Activated T-helper 1 cell treated with anti-CD3 and anti-CD28 coated beads, Interleukin-12 subunit alpha, Interleukin-12 subunit beta, Interleukin-2, Interleukin-4 antibody, amounts not matched to agents 30 ng/mL and 10 ng/mL and 1 ng/mL, durations not matched to agents 14 hours and 24 hours and 36 hours (primary cell): ENCODE measurements at regions of chr19 and their contacts with region 1.

Region 1: DNA sequence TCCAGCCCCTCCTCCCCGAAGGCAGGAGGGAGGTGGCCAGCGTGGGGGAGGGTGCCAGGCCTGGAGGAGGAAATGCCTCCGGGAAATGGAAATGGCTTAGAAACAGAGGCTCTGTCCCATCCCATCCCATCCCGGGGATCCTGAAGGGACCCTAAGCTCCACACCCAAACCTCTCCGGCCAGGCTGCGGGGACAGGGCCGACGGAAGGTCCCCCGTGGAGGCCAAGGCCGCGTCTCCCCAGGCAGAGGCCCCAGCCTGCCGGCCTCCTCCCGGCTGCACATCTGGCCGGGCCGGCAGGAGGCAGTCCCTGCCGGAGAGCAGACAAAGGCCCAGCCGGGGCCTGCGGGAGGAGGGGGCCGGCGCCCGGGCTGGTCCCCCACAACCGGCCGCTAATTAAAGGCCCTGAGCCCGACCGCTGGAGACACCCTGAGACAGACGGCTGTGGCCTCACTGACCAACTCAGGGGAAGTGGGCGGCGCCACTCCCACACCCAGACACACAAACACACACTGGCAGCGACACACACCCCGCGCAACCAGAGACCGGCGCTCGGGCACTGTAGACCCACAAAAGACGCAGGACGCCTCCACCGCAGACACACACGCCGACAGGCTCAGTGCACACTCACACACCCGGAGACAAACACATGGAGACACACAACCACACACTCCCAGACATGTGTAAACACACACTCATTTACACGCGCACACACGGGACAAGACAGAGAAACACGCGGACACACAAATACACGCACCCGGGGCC is 1.1 kb downstream of the ADAMTS10 start:
- DNase-seq: no peak
- H3K4me3 Mint-ChIP-seq: peak overlapping the region; percentile 88
- H3K27ac Mint-ChIP-seq: peak overlapping the region; percentile 76
- H3K4me1 Mint-ChIP-seq: peaks cover 14% of the 10 kb centered on the region
- H3K27me3 Mint-ChIP-seq: peaks cover 12% of the 10 kb centered on the region

Region 2: DNA sequence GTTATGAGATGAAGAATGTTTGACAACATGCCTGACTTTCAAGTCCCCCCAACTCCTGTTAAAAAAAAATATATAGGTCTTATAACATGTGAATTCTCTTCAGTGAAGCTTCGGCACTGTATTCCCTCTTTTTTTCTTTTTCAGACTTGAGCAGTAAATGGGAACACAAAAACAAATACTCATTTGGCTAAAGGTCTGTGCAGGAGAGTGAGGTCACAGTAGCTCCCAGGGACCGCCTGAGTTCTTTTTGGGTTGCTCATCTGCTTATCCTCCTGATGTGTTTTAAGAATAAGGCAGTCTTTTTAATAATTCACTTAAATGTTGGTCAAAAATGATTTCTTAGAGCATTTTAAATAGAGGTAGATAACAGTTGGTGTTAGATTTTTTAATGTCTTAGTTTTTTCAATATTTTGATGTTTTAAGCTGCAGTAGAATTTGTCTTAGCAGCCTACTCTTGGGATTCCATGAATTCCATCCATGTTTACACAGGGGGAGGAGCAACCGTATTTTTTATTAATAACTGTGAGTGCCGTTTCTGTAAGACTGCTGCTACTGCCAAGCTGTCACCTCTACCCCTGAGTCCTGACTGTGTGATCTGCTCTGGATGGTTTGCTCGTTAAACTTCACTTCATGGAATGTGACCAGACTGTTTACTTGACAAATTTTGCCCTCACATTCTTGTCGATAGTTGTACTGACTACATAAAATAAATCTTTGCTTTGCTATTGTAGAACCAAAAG is 149.8 kb before region 1 on chr19:
- intact Hi-C with region 1: no loop called
- DNase-seq: no peak
- H3K4me3 Mint-ChIP-seq: no peak overlapping the region
- H3K27ac Mint-ChIP-seq: peak overlapping the region; percentile 83
- H3K4me1 Mint-ChIP-seq: peaks cover 54% of the 10 kb centered on the region
- H3K27me3 Mint-ChIP-seq: no peaks in the 10 kb centered on the region

Region 3: GRCh38 chr19:8592231-8593009 is 17.0 kb before region 1 on chr19:
- intact Hi-C with region 1: loop called (anchors 1 kb)
- DNase-seq: peak; percentile 80
- H3K4me3 Mint-ChIP-seq: peak overlapping the region; percentile 68
- H3K27ac Mint-ChIP-seq: peak overlapping the region; percentile 24
- H3K4me1 Mint-ChIP-seq: peaks cover 8% of the 10 kb centered on the region
- H3K27me3 Mint-ChIP-seq: peaks cover 12% of the 10 kb centered on the region